ENCODE measurements at regions of chr10 and their contacts with region 1.

Region 1: GRCh38 chr10:98790802-98791201 is 344.1 kb upstream of the HPS1 start:
- DNase-seq: no peak
- H3K4me3 ChIP-seq: no peak overlapping the region
- H3K27ac ChIP-seq: no peak overlapping the region
- H3K4me1 ChIP-seq: no peaks in the 10 kb centered on the region
- H3K27me3 ChIP-seq: no peaks in the 10 kb centered on the region
- CTCF ChIP-seq: peak; percentile 39 to 43

Region 2: DNA sequence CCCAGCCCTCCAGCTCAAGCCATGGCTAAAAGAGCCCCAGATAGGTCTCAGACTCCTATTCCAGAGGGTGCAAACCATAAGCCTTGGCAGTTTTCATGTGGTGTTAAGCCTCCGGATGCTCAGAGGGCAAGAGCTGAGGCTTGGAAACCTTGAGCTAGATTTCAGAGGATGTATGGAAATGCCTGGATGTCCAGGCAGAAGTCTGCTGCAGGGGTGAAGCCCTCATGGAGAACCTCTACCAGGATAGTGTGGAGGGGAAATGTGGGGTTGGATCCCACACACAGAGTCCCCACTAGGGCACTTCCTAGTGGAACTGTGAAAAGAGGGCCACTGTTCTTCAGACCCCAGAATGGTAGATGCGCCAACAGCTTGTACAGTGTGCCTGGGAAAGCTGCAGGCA is 458.0 kb after region 1 on chr10:
- intact Hi-C with region 1: loop called (anchors 5 kb)
- DNase-seq: no peak
- H3K4me3 ChIP-seq: no peak overlapping the region
- H3K27ac ChIP-seq: no peak overlapping the region
- H3K4me1 ChIP-seq: peaks cover 0 to 7% (median 0%) of the 10 kb centered on the region in 4 donors
- H3K27me3 ChIP-seq: peaks cover 0 to 6% of the 10 kb centered on the region in 2 donors
- CTCF ChIP-seq: no peak